Mucosa of descending colon (tissue), 3 donors: ENCODE measurements at regions of chr3 and their contacts with region 1.

Region 1: DNA sequence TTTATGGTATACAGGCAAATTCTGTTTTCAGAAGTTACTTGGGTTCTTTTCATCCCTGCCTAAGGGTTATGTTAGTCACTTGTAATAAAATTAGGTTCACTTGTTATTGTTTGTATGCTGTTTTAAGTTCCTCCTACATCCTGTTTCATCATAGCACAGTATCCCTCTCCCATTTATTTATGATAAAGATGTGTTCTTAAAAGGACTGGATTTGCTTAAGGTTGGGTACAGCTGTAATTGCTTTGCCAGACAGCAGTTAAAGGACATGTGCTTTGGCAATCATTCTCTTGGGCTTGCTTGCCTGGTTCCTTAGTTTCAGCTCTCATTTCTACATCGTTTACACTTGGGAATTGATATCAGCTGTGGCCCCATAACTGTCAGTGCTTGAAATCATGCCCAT is 11.7 kb downstream of the ATP2C1 start:
- DNase-seq: peak in 1 of 3 donors; percentile 12
- ATAC-seq: peak; percentile 93
- H3K4me3 ChIP-seq: no peak overlapping the region
- H3K4me1 ChIP-seq: peaks cover 16% of the 10 kb centered on the region
- CTCF ChIP-seq: no peak

Region 2: GRCh38 chr3:130709671-130710070 is 195.9 kb before region 1 on chr3:
- intact Hi-C with region 1: no loop called
- DNase-seq: no peak
- ATAC-seq: no peak
- H3K4me3 ChIP-seq: no peak overlapping the region
- H3K4me1 ChIP-seq: no peaks in the 10 kb centered on the region
- CTCF ChIP-seq: no peak

Region 3: DNA sequence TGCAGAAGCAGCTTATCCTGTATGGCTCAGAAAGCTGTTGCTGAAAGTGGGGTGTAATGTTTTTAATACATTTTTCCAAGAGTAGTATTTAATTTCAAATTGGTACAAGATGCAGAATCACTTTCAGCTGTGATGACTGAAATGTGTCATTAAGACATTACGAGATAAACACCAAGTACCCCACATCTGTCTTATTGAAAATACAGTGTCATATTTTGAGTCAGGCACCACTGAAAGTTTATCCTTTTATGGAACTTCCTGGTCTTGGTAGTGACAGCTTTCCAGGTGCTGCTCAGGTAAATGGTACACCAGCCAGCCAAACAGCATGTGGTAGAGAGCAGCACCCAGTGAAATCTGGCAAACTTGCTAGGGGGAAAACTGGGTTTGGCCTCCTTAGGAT is 104.1 kb after region 1 on chr3:
- intact Hi-C with region 1: loop called in 1 of 2 experiments (anchors 10 kb)
- DNase-seq: no peak
- ATAC-seq: peak; percentile 44
- H3K4me3 ChIP-seq: no peak overlapping the region
- H3K4me1 ChIP-seq: no peaks in the 10 kb centered on the region
- CTCF ChIP-seq: no peak